ENCODE measurements at regions of chr12 and their contacts with region 1.

Region 1: DNA sequence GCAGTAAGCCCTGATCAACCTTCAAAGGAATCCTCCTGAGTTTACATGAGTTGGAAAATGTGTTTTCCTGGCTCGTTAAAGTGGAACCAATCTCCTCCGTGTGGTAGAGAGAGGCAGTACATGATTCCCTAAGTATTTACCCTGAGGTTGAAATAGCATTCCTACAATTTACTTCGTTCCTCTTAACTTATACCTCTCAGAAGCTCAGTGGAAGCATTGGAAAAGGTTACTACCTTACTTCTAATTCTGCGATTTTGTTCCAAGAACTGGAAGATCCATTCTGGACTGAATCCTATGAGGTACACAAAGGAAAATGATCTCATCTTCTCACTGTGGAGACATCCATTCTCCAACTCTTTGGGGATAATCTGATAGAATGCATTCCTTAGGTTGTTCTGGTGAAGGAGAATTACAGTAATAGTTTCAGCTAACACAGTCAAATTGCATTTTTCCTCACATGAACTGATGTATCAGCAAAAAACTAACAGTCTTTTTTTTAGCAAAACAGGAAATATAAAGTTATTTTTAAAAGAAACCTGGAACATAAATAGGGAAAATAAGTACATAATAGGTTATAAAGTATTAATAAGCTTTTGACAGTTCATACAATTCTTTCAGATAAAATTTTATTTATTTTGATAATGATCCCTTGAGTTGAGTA is 475.6 kb downstream of the PDZRN4 start:
- DNase-seq: peak; percentile 1
- H3K4me3 ChIP-seq: no peak overlapping the region
- H3K27me3 ChIP-seq: no peaks in the 10 kb centered on the region
- CTCF ChIP-seq: peak; percentile 55

Region 2: GRCh38 chr12:41277116-41277945 is 386.4 kb before region 1 on chr12:
- CTCF ChIA-PET with region 1: interaction called, 21 read pairs
- POLR2A ChIA-PET with region 1: no interaction called
- DNase-seq: no peak
- H3K4me3 ChIP-seq: no peak overlapping the region
- H3K27me3 ChIP-seq: no peaks in the 10 kb centered on the region
- CTCF ChIP-seq: peak; percentile 67

Region 3: DNA sequence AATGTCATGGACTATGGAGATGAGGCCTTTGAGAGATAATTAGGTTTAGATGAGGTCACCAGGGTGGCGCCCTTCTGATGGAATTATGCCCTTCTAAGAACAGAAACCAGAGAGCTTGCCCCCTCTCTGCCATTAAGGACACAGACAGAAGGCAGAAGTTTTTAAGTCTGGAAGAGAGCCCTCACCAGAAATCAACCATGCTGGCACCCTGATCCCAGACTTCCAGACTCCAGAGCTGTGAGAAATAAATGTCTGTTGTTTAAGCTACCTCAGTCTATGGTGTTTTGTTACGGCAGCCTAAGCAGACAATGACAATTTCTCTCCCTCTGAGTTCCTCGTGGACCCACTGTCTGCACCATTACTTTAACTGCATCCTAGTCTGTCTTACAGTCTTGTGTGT is 99.0 kb after region 1 on chr12:
- CTCF ChIA-PET with region 1: no interaction called
- POLR2A ChIA-PET with region 1: no interaction called
- DNase-seq: no peak
- H3K4me3 ChIP-seq: no peak overlapping the region
- H3K27me3 ChIP-seq: no peaks in the 10 kb centered on the region
- CTCF ChIP-seq: no peak

Region 4: GRCh38 chr12:42539696-42540095 is 876.0 kb after region 1 on chr12:
- CTCF ChIA-PET with region 1: no interaction called
- POLR2A ChIA-PET with region 1: no interaction called
- DNase-seq: peak; percentile 20
- H3K4me3 ChIP-seq: no peak overlapping the region
- H3K27me3 ChIP-seq: no peaks in the 10 kb centered on the region
- CTCF ChIP-seq: no peak